Activated CD4-positive, alpha-beta memory T cell treated with anti-CD3 and anti-CD28 coated beads for 36 hours (primary cell): ENCODE measurements at regions of chr18 and their contacts with region 1.

Region 1: GRCh38 chr18:51727780-51728179 is 530.3 kb upstream of the MEX3C start:
- DNase-seq: no peak
- H3K4me3 Mint-ChIP-seq: no peak overlapping the region
- H3K27ac Mint-ChIP-seq: no peak overlapping the region
- H3K4me1 Mint-ChIP-seq: no peaks in the 10 kb centered on the region
- H3K27me3 Mint-ChIP-seq: peaks cover 3% of the 10 kb centered on the region

Region 2: GRCh38 chr18:51128533-51128932 is 599.2 kb before region 1 on chr18:
- CTCF ChIA-PET with region 1: no interaction called
- POLR2A ChIA-PET with region 1: no interaction called
- intact Hi-C with region 1: loop called (anchors 5 kb)
- DNase-seq: no peak
- H3K4me3 Mint-ChIP-seq: no peak overlapping the region
- H3K27ac Mint-ChIP-seq: no peak overlapping the region
- H3K4me1 Mint-ChIP-seq: no peaks in the 10 kb centered on the region
- H3K27me3 Mint-ChIP-seq: no peaks in the 10 kb centered on the region

Region 3: GRCh38 chr18:51711298-51711889 is 16.4 kb before region 1 on chr18:
- CTCF ChIA-PET with region 1: no interaction called
- POLR2A ChIA-PET with region 1: no interaction called
- intact Hi-C with region 1: no loop called
- DNase-seq: no peak
- H3K4me3 Mint-ChIP-seq: no peak overlapping the region
- H3K27ac Mint-ChIP-seq: no peak overlapping the region
- H3K4me1 Mint-ChIP-seq: no peaks in the 10 kb centered on the region
- H3K27me3 Mint-ChIP-seq: no peaks in the 10 kb centered on the region